Right cardiac atrium (tissue), 5 donors: ENCODE measurements at regions of chr2 and their contacts with region 1.

Region 1: GRCh38 chr2:235116885-235117492 is 165.2 kb downstream of the SH3BP4 start:
- DNase-seq: no peak
- ATAC-seq: no peak
- H3K4me3 ChIP-seq: no peak overlapping the region
- H3K27ac ChIP-seq: no peak overlapping the region
- H3K4me1 ChIP-seq: no peaks in the 10 kb centered on the region
- H3K27me3 ChIP-seq: no peaks in the 10 kb centered on the region

Region 2: DNA sequence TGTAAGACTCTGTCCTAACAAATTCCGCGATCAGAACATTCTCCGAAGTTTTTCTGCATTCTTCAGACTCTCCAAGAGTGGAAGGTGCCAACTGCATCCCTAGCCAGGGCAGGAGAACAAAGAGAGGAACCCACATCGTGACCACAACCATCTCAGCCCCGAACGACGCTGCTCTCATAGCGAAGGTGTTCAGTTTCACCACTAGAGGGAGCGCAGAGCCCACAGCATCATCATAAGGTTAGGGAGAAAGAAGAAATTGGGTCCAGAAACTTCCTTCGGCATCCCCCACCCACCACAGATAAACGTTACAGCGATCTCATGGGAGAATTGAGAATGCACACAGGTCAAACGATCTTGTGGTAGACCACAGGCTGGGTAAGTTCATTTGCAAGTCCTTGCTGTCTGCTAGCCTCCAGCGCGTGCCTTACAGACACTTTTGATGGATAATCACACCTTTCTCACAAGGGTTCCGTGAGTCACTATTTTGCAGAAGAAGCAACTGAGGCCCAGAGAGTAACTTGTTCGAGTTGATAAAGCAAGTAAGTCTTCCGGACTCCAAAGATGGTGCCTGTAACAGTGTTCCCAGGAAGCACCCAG is 566.4 kb before region 1 on chr2:
- intact Hi-C with region 1: loop called (anchors 2 to 5 kb)
- DNase-seq: peak; percentile 49 to 74 (median 68)
- ATAC-seq: peak; percentile 80 to 84
- H3K4me3 ChIP-seq: no peak overlapping the region
- H3K27ac ChIP-seq: no peak overlapping the region
- H3K4me1 ChIP-seq: no peaks in the 10 kb centered on the region
- H3K27me3 ChIP-seq: no peaks in the 10 kb centered on the region

Region 3: GRCh38 chr2:235216901-235217300 is 99.9 kb after region 1 on chr2:
- intact Hi-C with region 1: no loop called
- DNase-seq: no peak
- ATAC-seq: no peak
- H3K4me3 ChIP-seq: no peak overlapping the region
- H3K27ac ChIP-seq: no peak overlapping the region
- H3K4me1 ChIP-seq: no peaks in the 10 kb centered on the region
- H3K27me3 ChIP-seq: no peaks in the 10 kb centered on the region

Region 4: DNA sequence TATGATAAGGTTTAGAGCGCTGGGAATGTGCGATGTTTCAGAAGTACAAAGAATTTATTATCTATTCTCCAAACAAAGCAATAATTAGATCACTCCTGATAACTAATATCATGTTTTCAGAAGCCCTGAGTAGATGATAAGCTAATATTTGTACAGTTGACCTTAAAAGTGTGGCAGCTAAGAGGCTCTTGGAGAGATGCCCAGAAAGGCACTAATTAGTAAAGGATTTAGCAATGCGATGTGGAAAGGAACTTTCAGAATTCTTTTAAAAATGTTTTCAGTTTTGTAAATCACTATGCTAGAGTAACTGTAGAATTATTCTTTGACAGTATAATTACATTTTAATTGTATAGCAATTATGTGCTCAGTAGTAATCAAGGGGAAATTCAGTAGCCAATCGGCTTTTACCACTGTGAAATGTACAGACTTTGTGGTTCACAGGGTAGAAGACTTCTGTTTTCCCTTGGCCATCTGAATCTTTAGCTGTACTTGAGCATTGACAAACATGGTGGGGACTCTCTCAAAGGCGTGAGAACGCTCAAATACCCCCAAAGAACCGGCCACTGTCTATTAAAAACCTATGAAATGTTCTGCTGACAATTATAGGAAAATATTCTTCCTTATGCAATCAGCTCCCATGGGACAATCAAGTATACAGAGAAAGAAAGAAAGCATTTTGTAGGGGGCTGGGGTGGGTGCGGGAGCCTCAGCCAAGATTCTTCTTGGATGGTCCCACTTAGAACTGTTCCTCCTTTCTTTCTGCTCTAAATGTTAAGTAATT is 114.0 kb after region 1 on chr2:
- intact Hi-C with region 1: no loop called
- DNase-seq: peak; percentile 46 to 70 (median 50)
- ATAC-seq: peak; percentile 69 to 72
- H3K4me3 ChIP-seq: peak overlapping the region; percentile 14
- H3K27ac ChIP-seq: peak overlapping the region; percentile 85
- H3K4me1 ChIP-seq: no peaks in the 10 kb centered on the region
- H3K27me3 ChIP-seq: no peaks in the 10 kb centered on the region